ENCODE measurements at regions of chr2 and their contacts with region 1.

Region 1: GRCh38 chr2:119476301-119477021 is 44.8 kb downstream of the TMEM37 start:
- DNase-seq: no peak
- H3K4me3 ChIP-seq: no peak overlapping the region
- H3K27ac ChIP-seq: no peak overlapping the region
- H3K4me1 ChIP-seq: peaks cover 0 to 25% (median 9%) of the 10 kb centered on the region in 4 donors
- H3K27me3 ChIP-seq: peaks cover 0 to 10% (median 0%) of the 10 kb centered on the region in 4 donors
- CTCF ChIP-seq: peak in 2 of 3 experiments; percentile 79 to 94
- EP300 ChIP-seq: no peak
- POLR2A ChIP-seq: no peak

Region 2: GRCh38 chr2:119407430-119408220 is 68.8 kb before region 1 on chr2:
- intact Hi-C with region 1: loop called (anchors 1 kb)
- DNase-seq: no peak
- H3K4me3 ChIP-seq: no peak overlapping the region
- H3K27ac ChIP-seq: no peak overlapping the region
- H3K4me1 ChIP-seq: peaks cover 0 to 6% (median 2%) of the 10 kb centered on the region in 4 donors
- H3K27me3 ChIP-seq: peaks cover 0 to 14% (median 0%) of the 10 kb centered on the region in 4 donors
- CTCF ChIP-seq: peak; percentile 78 to 82 (median 80)
- EP300 ChIP-seq: no peak
- POLR2A ChIP-seq: no peak

Region 3: GRCh38 chr2:119549241-119549640 is 72.8 kb after region 1 on chr2:
- intact Hi-C with region 1: no loop called
- DNase-seq: no peak
- H3K4me3 ChIP-seq: no peak overlapping the region
- H3K27ac ChIP-seq: no peak overlapping the region
- H3K4me1 ChIP-seq: peaks cover 6 to 20% (median 13%) of the 10 kb centered on the region in 4 donors
- H3K27me3 ChIP-seq: peaks cover 0 to 5% (median 2%) of the 10 kb centered on the region in 4 donors
- CTCF ChIP-seq: no peak
- EP300 ChIP-seq: no peak
- POLR2A ChIP-seq: no peak

Measured in esophagus muscularis mucosa (tissue), 4 donors.